ENCODE measurements at regions of chr3 and their contacts with region 1.

Region 1: DNA sequence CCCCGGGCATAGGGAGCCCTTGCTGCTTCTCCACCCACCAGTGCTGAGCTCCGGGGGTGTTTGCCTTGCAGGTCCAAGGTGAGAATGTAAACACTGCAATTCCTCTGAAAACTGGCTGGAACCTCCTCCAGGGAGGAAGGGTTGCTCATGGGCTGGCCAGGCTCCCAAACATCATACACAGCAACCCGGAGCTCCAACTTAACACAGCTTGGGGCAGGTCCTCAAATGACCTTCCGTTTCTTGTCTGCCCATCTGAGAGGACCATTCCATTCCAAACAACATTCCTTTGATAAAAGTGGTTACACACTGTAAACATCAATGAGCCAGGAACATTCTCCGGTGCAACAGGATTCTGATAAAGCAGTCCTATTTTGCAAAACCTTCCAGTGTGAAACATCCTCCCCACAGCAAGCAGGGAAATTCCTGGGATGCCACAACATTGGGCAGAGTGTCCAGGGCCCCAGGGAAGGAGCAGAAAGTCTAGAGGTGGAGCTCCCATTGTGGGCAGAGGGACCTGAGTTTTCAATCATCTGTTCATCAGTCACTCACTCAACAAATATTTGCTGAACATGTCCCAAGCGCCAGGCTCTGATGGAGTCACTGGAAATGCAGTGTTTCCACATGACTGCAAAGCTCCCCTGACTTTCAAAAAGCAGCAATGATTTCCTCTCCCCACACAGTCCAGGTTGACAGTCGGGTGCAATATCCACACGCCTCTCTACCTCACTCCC is 7.3 kb upstream of the HEG1 start:
- DNase-seq: peak; percentile 95 to 99
- H3K4me3 ChIP-seq: peak overlapping the region; percentile 8; the same call in 1 of the 2 replicates
- H3K27ac ChIP-seq: peak overlapping the region; percentile 65
- H3K4me1 ChIP-seq: peaks cover 64% of the 10 kb centered on the region
- H3K27me3 ChIP-seq: no peaks in the 10 kb centered on the region
- CTCF ChIP-seq: no peak

Region 2: DNA sequence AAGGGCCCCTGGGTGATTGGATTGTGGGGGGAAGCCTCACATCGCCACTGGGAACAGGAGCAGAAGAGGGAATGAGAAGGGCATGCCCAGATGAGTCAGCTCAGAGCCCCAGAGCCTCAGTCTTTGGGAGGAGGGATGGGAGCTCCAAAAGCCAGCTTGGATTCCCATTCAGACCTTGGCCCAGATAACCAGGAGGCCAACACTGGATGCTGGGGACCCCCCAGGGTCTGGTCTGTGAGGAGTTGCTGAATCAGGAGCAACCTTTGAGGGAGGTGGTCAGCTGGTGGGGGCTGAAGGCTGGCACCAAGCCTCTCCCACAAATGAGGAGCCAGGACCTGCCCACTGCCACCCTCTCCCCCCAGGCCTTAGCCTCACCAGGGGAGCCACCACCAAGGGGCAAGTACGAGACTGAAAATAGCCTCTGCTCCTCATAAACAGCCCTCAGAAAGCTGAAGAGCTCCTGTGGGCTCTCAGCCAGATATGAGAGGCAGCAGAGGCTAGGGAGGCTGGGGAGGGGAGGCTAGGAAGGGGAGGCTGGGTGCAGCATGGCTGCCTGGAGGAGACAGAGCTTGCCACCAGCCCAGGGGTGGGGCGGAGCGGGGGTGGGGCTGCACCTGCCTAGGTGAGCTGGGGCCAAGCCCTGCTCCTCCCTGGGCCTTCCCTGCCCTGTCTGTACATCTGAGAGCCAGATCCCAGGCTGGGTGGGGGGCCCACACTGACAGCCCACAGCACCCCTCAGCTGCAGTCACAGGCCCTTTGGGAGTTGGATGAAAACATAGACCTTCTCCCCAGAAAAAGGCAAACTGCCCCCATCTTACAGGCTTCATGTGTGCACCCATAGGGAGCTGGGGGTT is 1761.5 kb before region 1 on chr3:
- CTCF ChIA-PET with region 1: no interaction called
- POLR2A ChIA-PET with region 1: no interaction called
- intact Hi-C with region 1: no loop called
- DNase-seq: no peak
- H3K4me3 ChIP-seq: no peak overlapping the region
- H3K27ac ChIP-seq: no peak overlapping the region
- H3K4me1 ChIP-seq: 0 out of 2 replicates have a peak, but pooled peaks cover 4% of the 10 kb centered on the region
- H3K27me3 ChIP-seq: no peaks in the 10 kb centered on the region
- CTCF ChIP-seq: no peak

Region 3: DNA sequence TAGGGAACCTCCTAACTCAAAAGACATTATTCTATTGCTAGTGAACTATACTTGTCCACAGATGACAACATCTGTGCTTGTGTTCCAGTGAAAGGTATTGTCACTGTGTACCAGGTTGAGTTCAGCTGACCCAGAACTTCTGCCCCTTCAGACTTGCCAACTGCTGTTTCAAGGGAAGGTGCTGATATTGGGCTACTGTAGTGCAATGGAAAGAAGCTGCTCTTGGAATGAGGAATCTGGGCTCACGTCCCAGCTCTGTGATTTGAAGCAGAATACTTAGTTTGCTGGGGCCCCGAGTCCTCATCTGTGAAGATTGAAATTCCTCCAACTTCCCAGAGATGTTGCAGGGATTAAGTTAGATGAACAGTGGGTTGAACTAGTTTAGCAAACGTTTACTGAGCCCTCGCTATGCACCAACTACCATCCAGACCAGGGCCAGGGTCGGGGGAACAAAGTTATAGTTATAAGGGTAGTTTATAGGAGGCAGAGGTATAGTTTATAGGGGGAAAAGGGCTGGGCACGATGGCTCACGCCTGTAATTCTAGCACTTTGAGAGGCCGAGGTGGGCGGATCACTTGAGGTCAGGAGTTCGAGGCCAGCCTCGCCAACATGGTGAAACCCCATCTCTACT is 348.7 kb before region 1 on chr3:
- CTCF ChIA-PET with region 1: no interaction called
- POLR2A ChIA-PET with region 1: no interaction called
- intact Hi-C with region 1: no loop called
- DNase-seq: no peak
- H3K4me3 ChIP-seq: no peak overlapping the region
- H3K27ac ChIP-seq: no peak overlapping the region
- H3K4me1 ChIP-seq: no peaks in the 10 kb centered on the region
- H3K27me3 ChIP-seq: no peaks in the 10 kb centered on the region
- CTCF ChIP-seq: no peak

Region 4: DNA sequence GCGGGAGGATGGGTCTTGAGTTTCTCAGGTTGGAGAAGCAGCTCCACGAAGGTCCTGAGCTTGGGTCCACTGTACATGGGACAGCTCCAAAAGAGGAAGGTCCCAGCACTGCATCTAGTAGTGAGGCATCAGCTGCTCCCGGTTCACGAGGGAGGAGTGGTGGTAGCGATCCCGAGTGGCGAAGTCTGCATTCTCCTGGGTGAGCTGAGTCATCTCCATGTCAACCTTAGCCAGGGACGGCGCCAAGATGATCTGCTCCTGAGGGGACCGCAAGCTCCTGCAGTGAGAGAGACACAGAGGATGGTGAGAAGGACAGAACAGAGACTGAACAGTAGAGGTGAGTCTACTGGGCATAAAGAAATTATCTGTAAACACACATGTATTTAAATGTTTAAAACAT is 20.7 kb after region 1 on chr3:
- CTCF ChIA-PET with region 1: no interaction called
- POLR2A ChIA-PET with region 1: no interaction called
- intact Hi-C with region 1: loop called (anchors 1 kb)
- DNase-seq: no peak
- H3K4me3 ChIP-seq: no peak overlapping the region
- H3K27ac ChIP-seq: no peak overlapping the region
- H3K4me1 ChIP-seq: peaks cover 20% of the 10 kb centered on the region
- H3K27me3 ChIP-seq: no peaks in the 10 kb centered on the region
- CTCF ChIP-seq: no peak

Region 5: DNA sequence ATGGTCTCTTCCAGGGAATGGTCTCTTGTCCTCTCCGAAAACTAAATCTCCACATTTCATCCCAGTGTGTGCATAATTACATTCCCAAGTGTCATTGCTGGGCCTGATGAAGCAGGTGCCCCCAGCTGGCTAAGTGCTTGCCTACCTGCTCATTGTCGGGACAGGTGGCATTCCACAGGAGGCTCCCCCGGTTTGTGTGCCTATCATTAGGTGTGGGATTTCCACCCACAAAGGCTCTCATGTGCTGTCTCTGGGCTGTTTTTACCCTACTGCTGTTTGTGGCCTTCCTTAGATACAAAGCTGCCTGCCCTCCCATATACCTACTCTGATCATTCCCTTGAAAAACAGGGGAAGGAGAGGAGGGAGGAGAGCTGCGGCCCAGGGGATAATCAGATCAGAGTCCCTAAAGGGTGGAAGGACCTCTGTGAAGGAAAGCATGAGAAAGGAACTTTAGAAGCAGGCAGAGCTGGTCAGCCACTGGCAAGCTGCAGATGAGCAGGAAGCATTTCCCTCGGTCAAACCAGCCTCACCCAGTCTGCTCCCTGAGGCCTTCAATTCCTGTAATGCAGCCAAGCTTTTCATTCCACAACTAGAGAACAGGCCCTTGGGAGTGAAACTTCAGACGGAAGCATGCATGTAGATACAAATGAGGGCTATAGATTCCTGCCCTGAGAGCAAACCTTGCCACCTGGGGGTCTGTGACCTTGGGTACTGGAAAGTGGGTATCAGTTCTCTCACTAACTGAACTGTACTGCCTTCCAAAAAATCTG is 53.4 kb after region 1 on chr3:
- CTCF ChIA-PET with region 1: no interaction called
- POLR2A ChIA-PET with region 1: interaction called, 20 read pairs
- intact Hi-C with region 1: loop called (anchors 1 kb)
- DNase-seq: peak; percentile 77 to 84
- H3K4me3 ChIP-seq: no peak overlapping the region
- H3K27ac ChIP-seq: peak overlapping the region; percentile 81
- H3K4me1 ChIP-seq: peaks cover 26% of the 10 kb centered on the region
- H3K27me3 ChIP-seq: no peaks in the 10 kb centered on the region
- CTCF ChIP-seq: no peak

Region 6: GRCh38 chr3:125141596-125142419 is 78.8 kb after region 1 on chr3:
- CTCF ChIA-PET with region 1: no interaction called
- POLR2A ChIA-PET with region 1: interaction called, 5 read pairs
- intact Hi-C with region 1: loop called (anchors 5 kb)
- DNase-seq: no peak
- H3K4me3 ChIP-seq: no peak overlapping the region
- H3K27ac ChIP-seq: no peak overlapping the region
- H3K4me1 ChIP-seq: peaks cover 12% of the 10 kb centered on the region
- H3K27me3 ChIP-seq: no peaks in the 10 kb centered on the region
- CTCF ChIP-seq: no peak

Region 7: GRCh38 chr3:125231895-125232294 is 168.8 kb after region 1 on chr3:
- CTCF ChIA-PET with region 1: interaction called, 4 read pairs
- POLR2A ChIA-PET with region 1: interaction called, 6 read pairs
- intact Hi-C with region 1: loop called (anchors 5 kb)
- DNase-seq: peak in 1 of 2 experiments; percentile 88
- H3K4me3 ChIP-seq: no peak overlapping the region
- H3K27ac ChIP-seq: peak overlapping the region; percentile 95
- H3K4me1 ChIP-seq: peaks cover 21% of the 10 kb centered on the region
- H3K27me3 ChIP-seq: no peaks in the 10 kb centered on the region
- CTCF ChIP-seq: no peak

Region 8: DNA sequence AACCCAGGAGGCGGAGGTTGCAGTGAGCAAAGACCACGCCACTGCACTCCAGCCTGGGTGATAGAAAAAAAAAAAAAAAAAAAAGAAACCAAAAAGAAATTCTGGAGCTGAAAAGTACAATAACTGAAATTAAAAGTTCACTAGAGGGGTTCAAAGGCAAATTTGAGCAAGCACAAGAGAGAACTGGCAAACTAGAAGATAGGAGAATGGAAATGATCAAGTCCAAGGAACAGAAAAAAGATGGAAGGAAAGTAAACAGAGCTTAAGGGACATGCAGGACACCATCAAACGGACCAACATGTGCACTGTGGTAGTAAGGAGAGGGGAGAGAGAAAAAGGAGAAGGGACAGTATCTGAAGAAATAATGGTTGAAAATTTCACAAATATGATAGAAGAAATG is 444.1 kb after region 1 on chr3:
- CTCF ChIA-PET with region 1: no interaction called
- POLR2A ChIA-PET with region 1: no interaction called
- intact Hi-C with region 1: no loop called
- DNase-seq: no peak
- H3K4me3 ChIP-seq: no peak overlapping the region
- H3K27ac ChIP-seq: no peak overlapping the region
- H3K4me1 ChIP-seq: no peaks in the 10 kb centered on the region
- H3K27me3 ChIP-seq: no peaks in the 10 kb centered on the region
- CTCF ChIP-seq: no peak